K562 (cell line): ENCODE measurements at regions of chr4 and their contacts with region 1.

Region 1: DNA sequence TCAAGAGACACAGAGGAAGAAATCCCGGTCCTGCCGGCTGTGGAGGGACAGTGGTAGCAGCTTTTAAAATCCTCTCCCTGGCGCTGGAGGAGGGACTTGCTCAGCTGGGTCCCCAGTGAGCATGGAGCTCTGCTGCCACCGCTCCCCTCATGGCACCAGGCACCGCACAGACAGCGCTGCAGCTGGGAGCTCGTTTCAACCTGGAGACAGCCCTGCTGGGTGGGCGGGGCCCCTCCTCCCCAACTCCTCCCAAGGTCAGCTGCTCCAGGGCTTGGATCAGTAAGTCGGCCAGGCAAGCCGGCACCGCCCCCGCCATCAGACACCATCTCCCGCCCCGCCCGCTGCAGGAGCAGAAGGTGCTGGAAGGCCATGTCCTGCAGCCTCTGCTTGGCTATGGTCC is 16.4 kb downstream of the ZFYVE28 start:
- DNase-seq: peak; percentile 89 to 93 (median 90)
- ATAC-seq: peak; percentile 96
- H3K4me3 ChIP-seq: no peak overlapping the region
- H3K27ac ChIP-seq: no peak overlapping the region
- H3K4me1 ChIP-seq: peaks cover 30 to 74% of the 10 kb centered on the region in 2 experiments
- H3K27me3 ChIP-seq: no peaks in the 10 kb centered on the region
- CTCF ChIP-seq: no peak
- EP300 ChIP-seq: 0 out of 2 replicates have a peak, but pooled peaks have one; percentile 3
- POLR2A ChIP-seq: no peak
- RAD21 ChIP-seq: no peak

Region 2: GRCh38 chr4:2412885-2413716 is 11.1 kb after region 1 on chr4:
- CTCF ChIA-PET with region 1: interaction called, 4 read pairs
- POLR2A ChIA-PET with region 1: interaction called, 18 read pairs
- in situ Hi-C with region 1: no loop called
- intact Hi-C with region 1: loop called (anchors 2 kb)
- DNase-seq: peak; percentile 77 to 87 (median 78)
- ATAC-seq: peak; percentile 78
- H3K4me3 ChIP-seq: peak overlapping the region; percentile 37
- H3K27ac ChIP-seq: peak overlapping the region; percentile 84
- H3K4me1 ChIP-seq: peaks cover 59 to 72% of the 10 kb centered on the region in 2 experiments
- H3K27me3 ChIP-seq: no peaks in the 10 kb centered on the region
- CTCF ChIP-seq: peak; percentile 40 to 55 (median 50); a peak in 5 of 6 replicates
- EP300 ChIP-seq: peak; percentile 3; the same call in 1 of the 2 replicates
- POLR2A ChIP-seq: peak; percentile 66
- RAD21 ChIP-seq: peak in 1 of 2 experiments; percentile 26; a peak in 1 of 4 replicates

Region 3: DNA sequence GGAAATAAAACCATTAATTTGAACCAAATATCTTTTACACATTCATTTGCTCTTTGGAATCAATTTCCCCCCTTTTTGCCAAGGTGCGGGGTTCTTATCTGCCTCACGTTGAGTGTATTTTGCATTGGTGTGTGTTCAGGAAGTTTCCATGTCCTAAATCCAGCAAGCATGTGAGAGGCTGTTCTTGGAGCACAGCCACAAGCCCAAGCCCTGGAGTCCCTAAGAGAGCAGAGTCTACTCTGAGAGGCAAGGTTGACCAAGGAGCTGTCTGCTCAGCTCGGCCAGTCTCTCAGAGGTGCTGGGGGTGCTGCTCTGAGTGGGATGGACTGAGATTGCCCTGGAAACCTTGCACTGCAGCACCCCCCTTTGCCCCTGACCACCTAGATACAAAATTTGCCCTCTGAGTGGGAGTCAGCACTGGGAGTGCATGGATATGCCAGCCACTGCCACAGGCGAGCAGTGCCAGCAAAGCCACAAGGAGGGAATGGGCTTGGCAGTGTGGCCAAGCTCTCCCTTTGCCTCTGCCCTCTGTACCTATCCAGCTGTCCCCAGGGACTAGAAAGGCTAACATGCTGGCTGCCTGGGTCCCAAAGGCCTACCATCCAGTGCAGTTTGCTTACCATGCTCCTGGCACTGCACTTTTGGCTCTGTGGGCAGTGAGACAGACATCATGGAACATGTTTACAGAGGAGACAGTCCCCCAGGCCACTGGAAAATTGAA is 114.0 kb after region 1 on chr4:
- CTCF ChIA-PET with region 1: no interaction called
- POLR2A ChIA-PET with region 1: no interaction called
- in situ Hi-C with region 1: no loop called
- intact Hi-C with region 1: no loop called
- DNase-seq: peak in 1 of 4 experiments; percentile 8
- ATAC-seq: peak; percentile 34
- H3K4me3 ChIP-seq: no peak overlapping the region
- H3K27ac ChIP-seq: no peak overlapping the region
- H3K4me1 ChIP-seq: 0 out of 5 replicates have a peak, but pooled peaks cover 0 to 2% of the 10 kb centered on the region in 2 experiments
- H3K27me3 ChIP-seq: no peaks in the 10 kb centered on the region
- CTCF ChIP-seq: no peak
- EP300 ChIP-seq: no peak
- POLR2A ChIP-seq: no peak
- RAD21 ChIP-seq: no peak

Region 4: DNA sequence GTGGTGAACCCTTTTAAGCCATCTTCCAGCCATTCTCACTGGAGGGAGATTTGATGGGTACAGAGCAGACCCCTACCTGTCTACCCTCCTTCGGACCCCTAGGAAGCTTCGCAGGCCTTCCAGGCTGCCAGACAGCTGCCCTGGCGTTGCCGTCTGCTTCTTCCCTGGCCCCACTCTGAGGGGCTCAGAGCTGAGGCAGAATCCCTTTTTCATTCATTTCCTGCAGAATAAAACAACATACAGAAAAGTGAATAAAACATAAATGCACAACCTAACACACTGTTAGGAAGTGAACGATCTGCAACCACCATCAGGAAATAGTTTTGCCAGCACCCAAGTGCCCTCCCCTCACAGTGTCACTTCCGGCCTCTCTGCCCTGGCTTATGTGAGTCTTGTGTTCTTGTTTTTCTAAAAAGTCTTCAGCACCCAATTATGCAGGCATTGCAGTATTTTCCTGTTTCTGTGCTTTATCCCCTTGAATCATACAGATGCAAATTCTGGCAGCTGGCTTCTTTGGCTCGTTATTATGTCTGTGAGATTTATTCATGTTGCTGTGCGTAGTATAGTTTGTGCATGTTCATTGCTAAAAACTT is 436.0 kb after region 1 on chr4:
- CTCF ChIA-PET with region 1: no interaction called
- POLR2A ChIA-PET with region 1: no interaction called
- in situ Hi-C with region 1: no loop called
- intact Hi-C with region 1: no loop called
- DNase-seq: no peak
- ATAC-seq: no peak
- H3K4me3 ChIP-seq: no peak overlapping the region
- H3K27ac ChIP-seq: no peak overlapping the region
- H3K4me1 ChIP-seq: peaks cover 12 to 43% of the 10 kb centered on the region in 2 experiments; a peak in 4 of 5 replicates
- H3K27me3 ChIP-seq: no peaks in the 10 kb centered on the region
- CTCF ChIP-seq: no peak
- EP300 ChIP-seq: no peak
- POLR2A ChIP-seq: no peak
- RAD21 ChIP-seq: no peak